K562 (cell line): ENCODE measurements at regions of chr18 and their contacts with region 1.

Region 1: GRCh38 chr18:35526476-35527120 is 28.8 kb upstream of the INO80C start:
- DNase-seq: peak in 1 of 4 experiments; percentile 24
- ATAC-seq: peak; percentile 60
- H3K4me3 ChIP-seq: no peak overlapping the region
- H3K27ac ChIP-seq: no peak overlapping the region
- H3K4me1 ChIP-seq: peaks cover 3 to 6% of the 10 kb centered on the region in 2 experiments; a peak in 3 of 5 replicates
- H3K27me3 ChIP-seq: no peaks in the 10 kb centered on the region; a peak in 1 of 5 replicates
- CTCF ChIP-seq: no peak
- EP300 ChIP-seq: no peak
- POLR2A ChIP-seq: no peak
- RAD21 ChIP-seq: no peak

Region 2: GRCh38 chr18:35478520-35479435 is 47.8 kb before region 1 on chr18:
- CTCF ChIA-PET with region 1: no interaction called
- POLR2A ChIA-PET with region 1: no interaction called
- in situ Hi-C with region 1: no loop called
- intact Hi-C with region 1: no loop called
- DNase-seq: peak in 2 of 4 experiments; percentile 46 to 56
- ATAC-seq: peak; percentile 68
- H3K4me3 ChIP-seq: no peak overlapping the region
- H3K27ac ChIP-seq: no peak overlapping the region; the same call in 2 of the 3 replicates
- H3K4me1 ChIP-seq: no peaks in the 10 kb centered on the region; a peak in 1 of 5 replicates
- H3K27me3 ChIP-seq: no peaks in the 10 kb centered on the region
- CTCF ChIP-seq: no peak
- EP300 ChIP-seq: no peak
- POLR2A ChIP-seq: no peak
- RAD21 ChIP-seq: no peak

Region 3: DNA sequence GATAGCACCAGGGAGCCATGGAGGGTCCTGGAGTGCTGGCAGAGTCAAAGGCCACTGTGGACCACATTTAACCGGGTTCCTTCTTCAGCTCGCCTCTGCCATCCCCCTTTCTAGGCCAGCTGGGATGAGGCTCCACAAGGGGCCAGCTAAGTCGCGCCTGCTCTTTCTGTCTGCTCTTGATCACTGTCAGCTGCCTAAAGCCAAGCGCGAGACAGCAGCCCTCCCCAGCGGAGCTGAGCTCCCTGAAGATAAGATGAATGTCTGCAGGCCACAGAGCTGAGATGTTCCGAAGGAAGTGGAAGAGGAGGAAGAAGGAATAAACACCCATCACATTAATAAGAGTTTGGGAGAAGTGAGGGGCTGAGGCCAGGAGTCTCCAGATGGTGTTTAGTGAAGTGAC is 1939.4 kb after region 1 on chr18:
- CTCF ChIA-PET with region 1: no interaction called
- POLR2A ChIA-PET with region 1: no interaction called
- in situ Hi-C with region 1: loop called (anchors 10 kb)
- intact Hi-C with region 1: no loop called
- DNase-seq: no peak
- ATAC-seq: no peak
- H3K4me3 ChIP-seq: no peak overlapping the region
- H3K27ac ChIP-seq: no peak overlapping the region
- H3K4me1 ChIP-seq: no peaks in the 10 kb centered on the region
- H3K27me3 ChIP-seq: no peaks in the 10 kb centered on the region
- CTCF ChIP-seq: no peak
- EP300 ChIP-seq: no peak
- POLR2A ChIP-seq: no peak
- RAD21 ChIP-seq: no peak